Activated naive CD4-positive, alpha-beta T cell treated with anti-CD3 and anti-CD28 coated beads for 36 hours (primary cell): ENCODE measurements at regions of chr2 and their contacts with region 1.

Region 1: GRCh38 chr2:84970868-84971509 is at the start of gene KCMF1:
- DNase-seq: peak; percentile 80
- H3K4me3 Mint-ChIP-seq: peak within 1 kb of the TSS; percentile 98
- H3K27ac Mint-ChIP-seq: peak within 1 kb of the TSS; percentile 100
- H3K4me1 Mint-ChIP-seq: peaks cover 46% of the 10 kb centered on the region
- H3K27me3 Mint-ChIP-seq: no peaks in the 10 kb centered on the region
- total RNA-seq, gene KCMF1: 105 to 109 TPM

Region 2: DNA sequence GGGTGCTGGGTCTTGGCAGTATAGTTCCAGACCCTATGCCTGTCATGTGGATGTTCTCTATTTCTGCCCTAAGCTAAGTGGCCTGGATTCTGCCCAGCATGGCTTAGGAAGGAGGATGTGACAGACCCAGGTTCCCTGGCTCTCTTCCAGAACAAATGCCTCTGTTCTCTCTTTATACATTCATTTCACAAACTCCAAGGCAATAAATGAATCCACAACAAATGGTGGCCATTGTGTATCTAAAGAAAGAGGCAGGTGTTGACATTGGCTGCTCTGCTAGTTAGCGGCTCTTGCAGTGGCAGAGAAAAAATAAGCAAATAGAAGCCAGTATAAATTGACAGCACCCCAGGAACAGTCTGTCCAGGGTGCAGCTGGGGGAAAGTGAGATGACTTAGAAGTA is 810.5 kb before region 1 on chr2:
- CTCF ChIA-PET with region 1: no interaction called
- intact Hi-C with region 1: no loop called
- DNase-seq: no peak
- H3K4me3 Mint-ChIP-seq: no peak overlapping the region
- H3K27ac Mint-ChIP-seq: no peak overlapping the region
- H3K4me1 Mint-ChIP-seq: no peaks in the 10 kb centered on the region
- H3K27me3 Mint-ChIP-seq: peaks cover 14% of the 10 kb centered on the region

Region 3: GRCh38 chr2:84881581-84882414 is 89.2 kb before region 1 on chr2:
- CTCF ChIA-PET with region 1: no interaction called
- intact Hi-C with region 1: no loop called
- DNase-seq: peak; percentile 97
- H3K4me3 Mint-ChIP-seq: peak overlapping the region; percentile 87
- H3K27ac Mint-ChIP-seq: peak overlapping the region; percentile 97
- H3K4me1 Mint-ChIP-seq: peaks cover 51% of the 10 kb centered on the region
- H3K27me3 Mint-ChIP-seq: no peaks in the 10 kb centered on the region

Region 4: DNA sequence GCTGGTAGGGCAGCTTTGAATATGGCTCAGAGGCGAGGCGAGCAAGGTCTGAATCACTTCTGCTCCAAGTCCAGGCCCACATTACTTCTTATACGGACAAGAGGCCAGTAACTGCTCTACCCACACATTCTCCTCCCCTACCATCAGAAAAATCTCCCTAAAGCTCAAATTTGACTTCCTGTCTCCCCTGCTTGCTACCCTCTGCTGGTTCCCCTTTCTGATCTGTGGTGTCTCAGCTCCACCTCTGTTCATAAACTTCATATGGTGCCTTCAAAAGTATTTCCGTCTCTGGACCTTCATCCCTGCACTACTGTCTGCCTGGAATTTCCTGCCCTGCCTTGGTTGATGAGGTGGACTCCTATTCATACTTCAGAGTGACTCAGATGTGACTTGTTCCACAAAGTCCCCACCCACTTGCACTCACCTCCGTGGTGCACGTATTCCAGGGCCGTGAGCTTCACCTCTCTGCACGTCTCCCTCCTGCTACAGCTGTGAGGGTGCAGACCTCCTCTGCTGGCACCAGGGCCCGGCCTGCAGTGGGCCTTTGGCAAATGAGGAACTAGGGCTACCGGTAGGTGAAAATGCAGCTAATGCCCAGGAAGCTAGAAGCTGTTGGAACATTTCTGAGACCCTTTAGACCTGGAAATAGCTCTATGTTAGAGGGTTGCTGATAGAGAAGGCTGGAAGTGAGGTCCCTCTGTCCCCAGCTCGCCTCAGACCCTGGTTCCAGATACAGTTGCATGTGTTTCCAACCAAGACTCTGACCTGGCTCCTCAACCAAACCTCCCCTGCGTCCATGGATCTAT is 24.6 kb before region 1 on chr2:
- CTCF ChIA-PET with region 1: interaction called, 12 read pairs
- intact Hi-C with region 1: loop called (anchors 1 kb)
- DNase-seq: peak; percentile 86
- H3K4me3 Mint-ChIP-seq: peak overlapping the region; percentile 62
- H3K27ac Mint-ChIP-seq: peak overlapping the region; percentile 92
- H3K4me1 Mint-ChIP-seq: peaks cover 49% of the 10 kb centered on the region
- H3K27me3 Mint-ChIP-seq: no peaks in the 10 kb centered on the region

Region 5: DNA sequence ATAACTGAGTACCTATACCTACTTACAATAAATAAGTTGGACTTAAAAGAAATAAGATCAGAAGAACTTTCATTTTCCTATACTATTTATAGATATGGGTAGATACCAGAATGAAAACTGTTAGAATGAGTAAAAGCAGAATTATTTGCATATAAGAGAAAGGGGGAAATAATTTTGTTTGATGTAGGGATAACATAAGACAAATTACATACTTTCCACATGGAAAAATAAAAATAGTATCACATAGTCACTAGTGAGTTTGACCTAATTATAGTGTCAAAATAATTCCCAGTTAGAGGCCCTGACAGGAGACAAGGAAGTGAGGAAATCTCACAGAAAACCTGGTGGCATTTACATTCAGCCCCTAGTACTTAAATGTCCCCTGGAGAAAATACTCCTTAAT is 28.6 kb after region 1 on chr2:
- CTCF ChIA-PET with region 1: interaction called, 3 read pairs
- intact Hi-C with region 1: loop called (anchors 1 kb)
- DNase-seq: no peak
- H3K4me3 Mint-ChIP-seq: peak overlapping the region; percentile 53
- H3K27ac Mint-ChIP-seq: peak overlapping the region; percentile 97
- H3K4me1 Mint-ChIP-seq: peaks cover 79% of the 10 kb centered on the region
- H3K27me3 Mint-ChIP-seq: no peaks in the 10 kb centered on the region

Region 6: GRCh38 chr2:85017411-85018048 is 46.5 kb after region 1 on chr2:
- CTCF ChIA-PET with region 1: interaction called, 10 read pairs
- intact Hi-C with region 1: loop called (anchors 1 kb)
- DNase-seq: no peak
- H3K4me3 Mint-ChIP-seq: no peak overlapping the region
- H3K27ac Mint-ChIP-seq: peak overlapping the region; percentile 66
- H3K4me1 Mint-ChIP-seq: peaks cover 72% of the 10 kb centered on the region
- H3K27me3 Mint-ChIP-seq: no peaks in the 10 kb centered on the region

Region 7: DNA sequence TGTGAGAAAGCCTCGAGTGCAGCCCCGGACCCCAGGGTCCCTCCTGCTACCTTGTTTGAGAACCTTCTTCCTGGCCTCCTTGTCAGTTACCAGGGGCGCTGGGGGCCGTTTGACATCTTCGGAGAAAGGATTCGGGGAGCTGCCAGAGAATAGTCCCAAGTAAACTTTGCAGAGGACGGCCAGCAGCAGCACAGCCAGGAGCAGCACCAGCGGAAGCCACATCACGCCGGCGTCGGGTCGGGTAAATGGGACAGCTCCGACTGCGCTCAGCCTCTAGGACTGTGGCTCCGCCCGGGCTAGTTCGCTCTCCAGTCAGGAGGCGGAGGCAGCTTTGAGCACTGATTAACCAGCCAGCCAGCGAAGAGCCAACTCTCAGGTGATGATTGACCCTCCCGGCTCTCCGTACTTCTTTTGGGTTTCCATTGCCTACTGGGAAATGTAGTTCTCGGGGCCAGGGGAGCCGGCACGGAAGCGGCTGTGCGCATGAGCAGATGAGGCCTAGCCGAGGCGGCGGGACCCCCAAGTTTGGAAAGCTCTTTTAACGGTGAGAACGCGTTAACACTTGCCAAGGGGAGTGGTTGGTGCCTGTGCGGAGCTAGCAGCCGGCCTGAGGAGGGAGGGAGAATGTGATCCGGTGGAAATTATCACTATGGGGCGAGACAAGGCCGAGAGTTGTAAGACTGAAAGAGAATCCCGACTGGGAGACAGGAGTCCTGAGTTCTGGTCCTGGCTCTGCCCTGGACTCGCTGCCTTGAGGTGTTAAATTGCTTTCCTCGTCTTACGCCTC is 383.5 kb after region 1 on chr2 and contains the starts of genes ELMOD3 and RETSAT:
- CTCF ChIA-PET with region 1: no interaction called
- intact Hi-C with region 1: loop called (anchors 1 kb)
- DNase-seq: peak; percentile 99
- H3K4me3 Mint-ChIP-seq: peak within 1 kb of the TSS; percentile 99
- H3K27ac Mint-ChIP-seq: peak within 1 kb of the TSS; percentile 96
- H3K4me1 Mint-ChIP-seq: peaks cover 36% of the 10 kb centered on the region
- H3K27me3 Mint-ChIP-seq: no peaks in the 10 kb centered on the region
- total RNA-seq, gene ELMOD3: 14.8 to 15.4 TPM
- total RNA-seq, gene RETSAT: 19.7 to 24.5 TPM